ENCODE measurements at regions of chr4 and their contacts with region 1.

Region 1: GRCh38 chr4:168817370-168817769 is 192.7 kb downstream of the CBR4 start:
- DNase-seq: no peak
- ATAC-seq: no peak
- H3K4me3 ChIP-seq: no peak overlapping the region
- H3K27ac ChIP-seq: no peak overlapping the region
- H3K4me1 ChIP-seq: peaks cover 10% of the 10 kb centered on the region
- H3K27me3 ChIP-seq: no peaks in the 10 kb centered on the region
- CTCF ChIP-seq: no peak
- EP300 ChIP-seq: no peak
- POLR2A ChIP-seq: no peak
- RAD21 ChIP-seq: no peak

Region 2: DNA sequence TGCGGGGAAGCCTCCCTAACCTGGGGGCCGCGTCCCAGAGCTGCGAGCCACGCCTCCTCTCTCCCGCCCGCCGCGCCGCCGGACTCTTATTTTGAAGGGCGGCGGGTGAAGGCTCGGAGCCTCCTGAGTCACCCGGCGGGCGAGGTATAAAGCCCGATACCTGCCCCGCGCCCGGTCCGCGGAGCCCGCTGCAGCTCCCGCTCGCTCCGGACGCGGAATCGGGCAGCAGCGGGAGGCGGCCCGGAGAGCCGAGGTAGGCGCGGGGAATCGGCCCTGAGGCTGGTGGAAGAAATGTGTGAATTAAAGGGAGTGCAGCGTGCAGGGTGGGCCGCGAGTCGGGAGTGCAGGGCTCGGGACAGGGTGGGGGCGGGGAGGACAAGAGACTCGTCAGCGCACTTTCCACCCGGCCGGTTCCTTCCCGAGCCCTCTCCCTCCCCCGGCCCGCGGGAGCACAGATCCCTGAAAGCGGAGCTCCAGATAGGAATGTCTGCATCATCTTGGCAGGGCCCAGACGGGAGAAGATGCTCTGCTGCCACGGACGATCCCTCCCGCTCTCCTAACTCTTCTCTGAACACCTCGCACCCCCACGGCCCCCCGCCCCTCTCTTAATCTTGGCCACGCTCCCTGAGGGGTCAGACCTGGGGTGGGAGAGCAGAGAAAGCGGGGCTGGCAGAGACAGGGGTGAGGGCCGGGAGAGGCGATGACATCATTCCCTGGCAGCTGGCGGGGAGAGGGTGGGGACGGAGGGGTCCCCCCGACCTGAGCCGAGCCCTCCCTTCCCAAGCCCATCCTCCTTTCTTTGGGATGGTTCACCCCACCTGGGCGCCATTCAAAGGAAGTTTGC is 14.8 kb after region 1 on chr4:
- CTCF ChIA-PET with region 1: no interaction called
- POLR2A ChIA-PET with region 1: interaction called, 15 read pairs
- in situ Hi-C with region 1: no loop called
- intact Hi-C with region 1: loop called (anchors 1 kb)
- DNase-seq: peak; percentile 23
- ATAC-seq: peak; percentile 90
- H3K4me3 ChIP-seq: peak overlapping the region; percentile 32 to 68 (median 55)
- H3K27ac ChIP-seq: no peak overlapping the region
- H3K4me1 ChIP-seq: peaks cover 14% of the 10 kb centered on the region; the same call in 1 of the 2 replicates
- H3K27me3 ChIP-seq: peaks cover 3 to 37% of the 10 kb centered on the region in 2 experiments; a peak in 3 of 5 replicates
- CTCF ChIP-seq: no peak
- EP300 ChIP-seq: no peak
- POLR2A ChIP-seq: no peak
- RAD21 ChIP-seq: no peak; the same call in 1 of the 2 replicates

Region 3: GRCh38 chr4:168978001-168978700 is 160.8 kb after region 1 on chr4:
- CTCF ChIA-PET with region 1: no interaction called
- POLR2A ChIA-PET with region 1: no interaction called
- in situ Hi-C with region 1: no loop called
- intact Hi-C with region 1: no loop called
- DNase-seq: peak; percentile 38
- ATAC-seq: no peak
- H3K4me3 ChIP-seq: no peak overlapping the region
- H3K27ac ChIP-seq: peak overlapping the region; percentile 22
- H3K4me1 ChIP-seq: peaks cover 25% of the 10 kb centered on the region
- H3K27me3 ChIP-seq: no peaks in the 10 kb centered on the region
- CTCF ChIP-seq: no peak
- EP300 ChIP-seq: no peak
- POLR2A ChIP-seq: no peak
- RAD21 ChIP-seq: no peak